ENCODE measurements at regions of chr19 and their contacts with region 1.

Region 1: GRCh38 chr19:18192673-18193387 is at the start of gene MPV17L2:
- DNase-seq: peak; percentile 99
- H3K4me3 Mint-ChIP-seq: peak within 1 kb of the TSS; percentile 86
- H3K27ac Mint-ChIP-seq: peak within 1 kb of the TSS; percentile 87
- H3K4me1 Mint-ChIP-seq: peaks cover 21% of the 10 kb centered on the region
- H3K27me3 Mint-ChIP-seq: no peaks in the 10 kb centered on the region
- total RNA-seq, gene MPV17L2: 6.4 to 7.3 TPM

Region 2: GRCh38 chr19:18141031-18141430 is 51.8 kb before region 1 on chr19:
- CTCF ChIA-PET with region 1: no interaction called
- POLR2A ChIA-PET with region 1: no interaction called
- intact Hi-C with region 1: no loop called
- DNase-seq: no peak
- H3K4me3 Mint-ChIP-seq: no peak overlapping the region
- H3K27ac Mint-ChIP-seq: no peak overlapping the region
- H3K4me1 Mint-ChIP-seq: no peaks in the 10 kb centered on the region
- H3K27me3 Mint-ChIP-seq: no peaks in the 10 kb centered on the region

Region 3: GRCh38 chr19:18160971-18161635 is 31.7 kb before region 1 on chr19:
- CTCF ChIA-PET with region 1: interaction called, 12 read pairs
- POLR2A ChIA-PET with region 1: no interaction called
- intact Hi-C with region 1: no loop called
- DNase-seq: peak; percentile 84
- H3K4me3 Mint-ChIP-seq: peak overlapping the region; percentile 64
- H3K27ac Mint-ChIP-seq: no peak overlapping the region
- H3K4me1 Mint-ChIP-seq: peaks cover 4% of the 10 kb centered on the region
- H3K27me3 Mint-ChIP-seq: no peaks in the 10 kb centered on the region

Region 4: GRCh38 chr19:18173572-18174288 is 19.1 kb before region 1 on chr19 and contains the start of gene IFI30:
- CTCF ChIA-PET with region 1: interaction called, 6 read pairs
- POLR2A ChIA-PET with region 1: interaction called, 5 read pairs
- intact Hi-C with region 1: loop called (anchors 2 kb)
- DNase-seq: peak; percentile 77
- H3K4me3 Mint-ChIP-seq: peak within 1 kb of the TSS; percentile 83
- H3K27ac Mint-ChIP-seq: peak within 1 kb of the TSS; percentile 72
- H3K4me1 Mint-ChIP-seq: peaks cover 9% of the 10 kb centered on the region
- H3K27me3 Mint-ChIP-seq: no peaks in the 10 kb centered on the region
- total RNA-seq, gene IFI30: 23.7 to 26.9 TPM

Region 5: GRCh38 chr19:18211683-18212082 is 18.9 kb after region 1 on chr19:
- CTCF ChIA-PET with region 1: no interaction called
- POLR2A ChIA-PET with region 1: no interaction called
- intact Hi-C with region 1: no loop called
- DNase-seq: no peak
- H3K4me3 Mint-ChIP-seq: no peak overlapping the region
- H3K27ac Mint-ChIP-seq: no peak overlapping the region
- H3K4me1 Mint-ChIP-seq: no peaks in the 10 kb centered on the region
- H3K27me3 Mint-ChIP-seq: peaks cover 6% of the 10 kb centered on the region

Region 6: GRCh38 chr19:18239303-18239702 is 46.5 kb after region 1 on chr19:
- CTCF ChIA-PET with region 1: no interaction called
- POLR2A ChIA-PET with region 1: no interaction called
- intact Hi-C with region 1: no loop called
- DNase-seq: no peak
- H3K4me3 Mint-ChIP-seq: no peak overlapping the region
- H3K27ac Mint-ChIP-seq: no peak overlapping the region
- H3K4me1 Mint-ChIP-seq: no peaks in the 10 kb centered on the region
- H3K27me3 Mint-ChIP-seq: peaks cover 28% of the 10 kb centered on the region

Region 7: DNA sequence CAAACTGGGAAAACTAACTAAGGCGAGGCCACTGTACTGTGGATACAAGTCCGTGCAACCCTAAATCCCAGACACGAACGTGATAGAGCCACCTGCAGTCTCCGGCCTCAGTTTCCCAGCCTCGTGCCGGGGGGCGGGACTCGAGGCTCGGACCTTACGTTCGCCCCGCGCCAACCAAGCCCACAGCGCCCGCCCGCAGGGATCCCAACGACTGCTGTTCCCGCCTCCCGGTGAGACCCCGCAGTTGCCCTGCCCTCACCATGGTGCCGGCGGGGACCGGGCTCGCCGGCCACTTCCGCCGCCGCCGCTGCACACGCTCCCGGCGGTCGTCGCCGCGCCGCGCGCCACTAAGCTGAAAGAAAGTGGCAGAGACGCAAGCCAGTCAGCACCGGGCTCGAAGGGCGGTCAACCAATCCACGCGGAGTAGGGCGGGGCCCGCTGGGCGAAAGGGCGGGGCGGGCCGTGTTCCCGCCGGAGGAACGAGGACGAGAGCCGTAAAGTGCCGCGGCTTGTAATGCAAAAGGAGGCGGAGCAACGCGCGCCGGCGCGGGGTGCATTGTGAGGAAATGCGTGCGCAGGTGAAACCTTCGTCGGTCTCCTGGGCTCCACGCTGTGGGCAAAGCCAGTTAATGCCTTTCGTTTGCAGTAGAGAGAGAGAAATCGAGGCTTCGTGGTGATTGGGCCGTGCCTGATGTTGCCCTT is 130.1 kb after region 1 on chr19 and contains the start of gene LSM4:
- CTCF ChIA-PET with region 1: interaction called, 5 read pairs
- POLR2A ChIA-PET with region 1: no interaction called
- intact Hi-C with region 1: loop called (anchors 1 kb)
- DNase-seq: peak; percentile 100
- H3K4me3 Mint-ChIP-seq: peak within 1 kb of the TSS; percentile 83
- H3K27ac Mint-ChIP-seq: peak within 1 kb of the TSS; percentile 95
- H3K4me1 Mint-ChIP-seq: peaks cover 48% of the 10 kb centered on the region
- H3K27me3 Mint-ChIP-seq: no peaks in the 10 kb centered on the region
- total RNA-seq, gene LSM4: 356 to 361 TPM